ENCODE measurements at regions of chr7 and their contacts with region 1.

Region 1: DNA sequence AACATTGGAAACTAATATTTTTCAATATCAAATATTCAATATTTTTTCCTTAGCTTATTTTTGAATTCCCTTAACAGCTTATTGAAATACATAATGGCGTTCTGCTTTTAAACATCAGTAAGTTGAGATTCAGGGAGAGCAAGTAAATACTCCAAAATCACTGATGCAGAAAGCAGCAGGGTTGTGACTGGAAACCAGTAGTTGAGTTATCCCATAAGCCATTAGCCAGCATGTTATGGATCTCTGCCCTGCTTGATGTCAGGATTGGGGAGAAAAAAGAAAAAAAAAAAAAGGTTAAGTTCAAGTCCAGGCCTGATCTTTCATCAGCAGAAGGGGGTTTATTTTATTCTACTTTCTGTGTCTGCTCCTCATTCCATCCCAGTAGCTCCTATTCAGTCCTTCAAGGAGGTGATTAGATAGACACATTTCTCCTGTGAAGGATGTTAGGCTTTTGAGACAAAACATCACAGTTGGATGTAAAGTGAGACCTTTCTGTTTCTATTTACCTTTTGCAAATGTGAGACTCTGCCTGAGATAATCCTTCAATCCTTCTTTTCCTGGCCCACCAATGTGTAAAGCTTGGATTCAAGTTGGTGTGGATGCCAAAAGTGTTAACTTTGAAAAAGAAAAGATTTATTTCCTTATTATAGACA is 110.9 kb upstream of the HDAC9 start:
- DNase-seq: no peak

Region 2: DNA sequence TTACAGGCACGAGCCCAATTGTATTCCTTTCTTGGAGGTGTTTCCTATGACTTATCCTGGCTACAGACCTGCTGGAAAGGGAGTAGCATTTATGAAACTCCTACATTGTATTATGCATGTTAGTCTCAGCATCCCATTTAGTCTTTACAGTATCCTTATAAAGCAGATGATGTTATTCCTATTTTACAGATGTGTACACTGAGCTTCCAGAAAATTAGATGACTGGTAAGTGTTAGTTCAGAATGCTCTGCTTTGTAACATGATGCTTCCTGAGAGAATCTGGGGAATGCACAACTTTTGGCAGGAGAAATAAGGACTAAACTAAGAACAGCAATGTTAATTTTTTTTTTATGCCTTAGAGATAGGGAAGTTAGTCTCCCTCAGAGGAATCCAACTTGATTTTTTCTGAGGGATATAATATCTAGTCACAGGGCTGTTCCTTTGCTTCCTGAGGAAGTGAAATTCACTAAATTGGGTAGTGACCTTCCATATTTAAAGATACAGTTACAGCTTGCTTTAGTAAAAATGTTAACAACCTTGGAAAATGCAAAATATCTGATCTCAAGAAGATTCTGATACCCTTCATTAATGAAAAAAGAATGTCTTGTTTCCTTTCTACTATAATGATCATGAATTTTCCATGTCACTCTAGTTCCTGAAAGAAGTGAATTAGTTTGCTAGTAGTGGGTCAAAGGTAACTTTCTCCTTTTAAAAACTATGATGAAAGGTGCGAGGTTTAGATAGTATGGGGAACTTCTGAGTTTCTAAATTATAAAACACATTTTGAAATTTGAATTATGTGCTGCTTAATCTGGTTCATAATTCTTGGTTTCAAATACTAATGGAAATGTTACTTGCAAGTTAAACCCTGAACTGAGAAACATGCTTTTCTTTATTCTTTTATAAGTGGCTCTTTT is 163.0 kb before region 1 on chr7:
- intact Hi-C with region 1: no loop called
- DNase-seq: no peak

Region 3: GRCh38 chr7:18363751-18364380 is 20.8 kb before region 1 on chr7:
- intact Hi-C with region 1: loop called in 1 of 2 experiments (anchors 2 kb)
- DNase-seq: no peak

Region 4: GRCh38 chr7:18481776-18482175 is 97.2 kb after region 1 on chr7:
- intact Hi-C with region 1: loop called in 1 of 2 experiments (anchors 10 kb)
- DNase-seq: no peak

Measured in posterior vena cava (tissue), 2 donors.